ENCODE measurements at regions of chrX and their contacts with region 1.

Region 1: DNA sequence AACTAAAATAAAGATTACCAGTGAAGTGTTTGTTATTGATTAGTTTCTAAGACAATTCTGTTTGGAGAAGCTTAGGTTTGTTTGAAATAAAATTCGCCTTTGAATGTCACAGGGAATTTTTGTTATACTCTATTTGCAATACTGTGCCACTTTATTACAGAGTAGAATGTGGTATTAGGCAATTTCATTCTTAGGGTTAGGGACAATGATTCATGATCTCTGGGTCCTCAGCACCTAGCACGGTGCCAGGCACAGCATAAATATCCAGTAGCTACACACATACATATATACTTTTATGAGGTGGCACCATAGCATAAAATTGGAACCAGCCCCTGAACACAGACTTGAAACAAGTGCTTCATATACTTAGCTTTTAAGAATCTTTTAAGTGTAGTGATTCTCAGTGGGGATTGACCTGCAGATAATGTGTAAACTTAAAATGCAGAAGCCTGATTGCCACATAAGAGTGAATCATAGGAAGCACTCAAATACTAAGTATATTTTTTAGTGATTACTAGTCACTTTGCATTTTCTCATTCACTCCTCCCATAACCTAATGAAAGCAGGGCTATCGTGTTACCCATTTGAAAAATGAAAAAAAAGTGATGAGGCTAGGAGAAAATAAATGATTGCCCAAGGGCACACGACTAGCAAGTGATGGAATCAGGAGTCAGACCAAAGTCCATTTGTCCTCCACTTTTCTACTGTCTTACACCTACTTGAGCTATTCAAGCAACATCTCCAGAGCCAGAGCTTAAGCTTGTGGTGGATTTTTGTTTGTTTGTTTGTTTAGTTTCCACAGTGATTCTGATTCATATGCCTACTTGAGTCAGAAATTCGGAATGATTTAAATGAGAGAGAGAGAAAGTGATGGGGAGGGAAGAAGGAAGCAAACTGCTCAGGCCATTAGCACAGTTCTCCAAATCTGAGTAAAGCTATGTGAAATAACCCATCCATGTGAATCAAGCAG is 366.0 kb upstream of the FGF13 start:
- DNase-seq: peak; percentile 64 to 83 (median 80)
- H3K4me3 ChIP-seq: peak overlapping the region in 1 of 3 experiments; percentile 18
- H3K4me3 Mint-ChIP-seq: peak overlapping the region in 1 of 2 donors; percentile 53
- H3K27ac ChIP-seq: peak overlapping the region in 1 of 2 donors; percentile 84
- H3K27ac Mint-ChIP-seq: peak overlapping the region; percentile 55 to 91 (median 87)
- H3K4me1 ChIP-seq: peaks cover 23 to 26% of the 10 kb centered on the region in 2 donors
- H3K4me1 Mint-ChIP-seq: peaks cover 25% of the 10 kb centered on the region
- H3K27me3 ChIP-seq: no peaks in the 10 kb centered on the region
- H3K27me3 Mint-ChIP-seq: peaks cover 0 to 2% (median 2%) of the 10 kb centered on the region in 3 donors
- CTCF ChIP-seq: no peak

Region 2: GRCh38 chrX:138925330-138925729 is 152.2 kb before region 1 on chrX:
- intact Hi-C with region 1: loop called in 1 of 2 experiments (anchors 5 kb)
- DNase-seq: peak; percentile 70 to 89 (median 82)
- H3K4me3 ChIP-seq: peak overlapping the region in 1 of 3 experiments; percentile 12
- H3K4me3 Mint-ChIP-seq: peak overlapping the region in 1 of 2 donors; percentile 57
- H3K27ac ChIP-seq: peak overlapping the region in 1 of 2 donors; percentile 52
- H3K27ac Mint-ChIP-seq: peak overlapping the region; percentile 40 to 89 (median 68)
- H3K4me1 ChIP-seq: peaks cover 20 to 22% of the 10 kb centered on the region in 2 donors
- H3K4me1 Mint-ChIP-seq: peaks cover 30% of the 10 kb centered on the region
- H3K27me3 ChIP-seq: no peaks in the 10 kb centered on the region
- H3K27me3 Mint-ChIP-seq: peaks cover 0 to 2% (median 0%) of the 10 kb centered on the region in 3 donors
- CTCF ChIP-seq: no peak

Region 3: DNA sequence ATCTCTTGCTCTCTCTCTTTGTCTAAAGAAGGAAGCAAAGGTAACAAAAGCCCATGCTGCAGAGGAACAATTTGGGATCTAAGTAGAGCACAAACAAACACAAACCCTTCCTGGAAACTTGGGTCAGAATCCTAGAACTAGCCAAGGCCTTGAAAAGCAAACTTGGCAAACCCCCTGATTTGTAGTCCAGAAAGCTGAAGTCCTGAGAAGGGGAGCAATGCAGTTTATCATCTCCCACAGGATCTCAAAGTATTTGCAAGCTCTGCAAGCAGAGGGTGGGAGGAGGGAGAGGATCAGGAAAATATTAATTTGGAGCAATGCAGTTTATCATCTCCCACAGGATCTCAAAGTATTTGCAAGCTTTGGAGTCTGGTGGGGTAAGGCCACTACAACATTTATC is 13.5 kb after region 1 on chrX:
- intact Hi-C with region 1: no loop called
- DNase-seq: no peak
- H3K4me3 ChIP-seq: no peak overlapping the region
- H3K4me3 Mint-ChIP-seq: no peak overlapping the region
- H3K27ac ChIP-seq: no peak overlapping the region
- H3K27ac Mint-ChIP-seq: no peak overlapping the region
- H3K4me1 ChIP-seq: peaks cover 2% of the 10 kb centered on the region in 2 donors
- H3K4me1 Mint-ChIP-seq: peaks cover 5% of the 10 kb centered on the region
- H3K27me3 ChIP-seq: no peaks in the 10 kb centered on the region
- H3K27me3 Mint-ChIP-seq: peaks cover 0 to 9% (median 1%) of the 10 kb centered on the region in 3 donors
- CTCF ChIP-seq: no peak

Measured in CD14-positive monocyte (primary cell).